ENCODE measurements at regions of chr9 and their contacts with region 1.

Region 1: DNA sequence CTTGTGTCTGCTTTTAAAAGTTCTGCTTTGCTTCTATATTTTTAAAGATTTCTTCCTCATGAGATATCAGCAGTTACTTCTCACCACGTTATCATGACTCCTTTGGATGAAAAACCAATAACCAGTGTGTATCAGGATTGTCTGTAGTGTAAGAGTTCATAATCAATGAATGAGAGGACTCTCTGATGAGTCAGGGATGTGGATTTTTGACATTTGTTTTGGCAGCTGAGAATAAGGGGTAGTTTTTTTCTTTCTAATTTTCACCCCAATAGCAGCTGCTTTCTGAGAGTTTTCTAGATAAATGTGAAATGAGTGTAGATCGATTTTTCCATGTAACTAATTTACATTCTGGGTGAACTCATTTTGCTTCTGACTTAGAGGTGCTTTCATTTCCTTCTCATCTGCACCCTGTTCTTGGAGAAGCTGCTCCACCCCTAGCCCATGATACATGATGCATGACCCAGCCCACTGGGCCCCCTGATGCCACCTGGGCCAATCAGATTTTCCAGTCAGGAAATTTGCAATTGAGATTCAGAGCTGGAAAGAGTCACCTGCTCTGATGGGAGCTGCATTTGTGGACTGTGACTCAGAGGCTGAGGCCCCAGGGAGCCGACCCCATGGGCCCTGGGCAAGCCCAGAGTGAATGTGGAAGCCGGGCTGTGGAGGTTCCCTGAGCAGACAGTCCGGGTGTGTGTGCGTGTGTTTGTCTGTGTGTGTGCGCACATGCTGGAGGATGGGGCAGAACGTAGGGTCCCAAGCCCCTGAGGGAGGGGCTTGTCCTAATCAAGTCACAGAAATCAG is 159.3 kb downstream of the RGS3 start:
- DNase-seq: peak; percentile 20
- H3K4me3 Mint-ChIP-seq: peak overlapping the region; percentile 53
- H3K27ac Mint-ChIP-seq: peak overlapping the region; percentile 98
- H3K4me1 Mint-ChIP-seq: peaks cover 52% of the 10 kb centered on the region
- H3K27me3 Mint-ChIP-seq: no peaks in the 10 kb centered on the region

Region 2: DNA sequence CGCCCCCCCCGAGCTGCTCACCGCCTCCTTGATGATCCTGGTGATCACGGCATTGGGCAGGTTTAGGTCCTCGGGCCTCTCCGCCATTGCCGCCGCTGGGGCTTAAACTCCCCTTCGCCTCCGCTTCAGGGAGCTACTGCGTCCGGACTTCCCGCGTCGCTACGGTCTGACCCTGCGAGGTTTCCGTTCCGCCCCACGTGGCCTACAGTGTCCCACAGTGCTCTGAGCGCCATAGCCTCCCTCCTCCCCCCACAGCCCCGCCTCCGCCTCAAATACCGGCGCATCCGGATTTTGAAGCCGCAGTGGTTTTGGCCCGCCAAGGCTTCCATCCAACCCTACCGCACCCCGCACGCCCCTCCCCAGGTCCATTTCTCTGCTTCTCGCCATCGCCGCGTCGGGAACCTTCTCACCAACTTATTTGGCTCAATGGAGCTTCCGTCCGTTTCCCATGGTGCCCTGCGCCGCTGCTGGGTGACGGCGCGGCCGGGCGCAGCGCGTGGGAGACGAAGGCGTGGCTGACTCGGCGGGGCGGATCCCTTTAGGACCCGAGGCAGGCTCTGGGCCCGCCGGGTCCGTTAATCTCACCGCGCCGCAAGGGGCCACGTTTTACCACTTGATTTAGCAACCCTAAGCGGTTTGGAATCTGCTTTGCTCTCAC is 212.5 kb before region 1 on chr9 and contains the starts of genes C9orf43 and POLE3:
- intact Hi-C with region 1: no loop called
- DNase-seq: peak; percentile 94
- H3K4me3 Mint-ChIP-seq: peak within 1 kb of the TSS; percentile 97
- H3K27ac Mint-ChIP-seq: peak within 1 kb of the TSS; percentile 99
- H3K4me1 Mint-ChIP-seq: peaks cover 20% of the 10 kb centered on the region
- H3K27me3 Mint-ChIP-seq: no peaks in the 10 kb centered on the region
- total RNA-seq, gene C9orf43: 0.48 TPM in 2 replicates
- total RNA-seq, gene POLE3: 71.0 and 73.8 TPM in 2 replicates

Region 3: GRCh38 chr9:113511856-113512761 is 110.7 kb before region 1 on chr9:
- intact Hi-C with region 1: loop called (anchors 1 kb)
- DNase-seq: peak; percentile 66
- H3K4me3 Mint-ChIP-seq: peak overlapping the region; percentile 54
- H3K27ac Mint-ChIP-seq: peak overlapping the region; percentile 96
- H3K4me1 Mint-ChIP-seq: peaks cover 56% of the 10 kb centered on the region
- H3K27me3 Mint-ChIP-seq: peaks cover 4% of the 10 kb centered on the region

Region 4: GRCh38 chr9:113602126-113603044 is 20.4 kb before region 1 on chr9:
- intact Hi-C with region 1: loop called (anchors 1 kb)
- DNase-seq: no peak
- H3K4me3 Mint-ChIP-seq: no peak overlapping the region
- H3K27ac Mint-ChIP-seq: peak overlapping the region; percentile 77
- H3K4me1 Mint-ChIP-seq: peaks cover 16% of the 10 kb centered on the region
- H3K27me3 Mint-ChIP-seq: no peaks in the 10 kb centered on the region